Natural killer cell (primary cell): ENCODE measurements at regions of chr13 and their contacts with region 1.

Region 1: DNA sequence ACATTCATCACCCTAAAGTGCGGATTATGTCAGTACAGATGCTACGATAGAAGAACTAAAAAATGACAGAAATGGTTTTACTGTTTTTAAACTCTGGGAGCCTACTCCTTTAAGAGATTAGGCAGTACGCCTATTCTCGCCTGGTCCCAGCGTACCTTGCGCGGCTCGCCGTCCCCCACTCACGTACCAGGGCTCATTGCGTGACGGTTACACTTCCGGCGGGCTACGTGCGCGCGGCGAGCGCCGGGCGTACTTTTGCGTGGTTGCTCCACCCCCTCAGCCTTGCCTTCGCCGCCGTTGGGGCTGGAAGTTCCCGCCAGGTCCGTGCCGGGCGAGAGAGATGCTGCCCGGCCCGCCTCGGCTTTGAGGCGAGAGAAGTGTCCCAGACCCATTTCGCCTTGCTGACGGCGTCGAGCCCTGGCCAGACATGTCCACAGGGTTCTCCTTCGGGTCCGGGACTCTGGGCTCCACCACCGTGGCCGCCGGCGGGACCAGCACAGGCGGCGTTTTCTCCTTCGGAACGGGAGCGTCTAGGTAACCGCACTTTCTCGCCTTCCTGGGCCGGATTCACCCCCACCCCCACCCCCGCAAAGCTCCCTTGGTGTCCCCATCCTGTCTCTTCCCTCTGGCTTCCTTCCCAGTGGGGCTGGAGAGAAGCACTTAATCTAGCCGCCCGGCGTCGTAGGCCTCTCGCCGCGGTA is at the start of gene NUP58:
- DNase-seq: peak; percentile 92 to 98
- ATAC-seq: peak; percentile 97 to 100 (median 98)
- H3K4me3 ChIP-seq: peak within 1 kb of the TSS; percentile 88
- H3K4me3 Mint-ChIP-seq: peak within 1 kb of the TSS; percentile 90
- H3K27ac ChIP-seq: peak within 1 kb of the TSS; percentile 93
- H3K27ac Mint-ChIP-seq: peak within 1 kb of the TSS; percentile 91 to 94
- H3K4me1 ChIP-seq: peaks cover 13% of the 10 kb centered on the region
- H3K4me1 Mint-ChIP-seq: peaks cover 31 to 36% of the 10 kb centered on the region in 2 donors
- H3K27me3 ChIP-seq: peaks cover 7% of the 10 kb centered on the region
- H3K27me3 Mint-ChIP-seq: peaks cover 12 to 20% of the 10 kb centered on the region in 2 donors
- CTCF ChIP-seq: no peak
- total RNA-seq, gene NUP58: 47.4 to 60.0 (median 50.6) TPM

Region 2: GRCh38 chr13:24922745-24923591 is 378.5 kb before region 1 on chr13:
- intact Hi-C with region 1: loop called (anchors 5 kb)
- DNase-seq: peak; percentile 87 to 95
- ATAC-seq: peak; percentile 98 to 100 (median 98)
- H3K4me3 ChIP-seq: peak overlapping the region; percentile 86
- H3K4me3 Mint-ChIP-seq: peak overlapping the region; percentile 96
- H3K27ac ChIP-seq: peak overlapping the region; percentile 97
- H3K27ac Mint-ChIP-seq: peak overlapping the region; percentile 94
- H3K4me1 ChIP-seq: peaks cover 5% of the 10 kb centered on the region
- H3K4me1 Mint-ChIP-seq: peaks cover 17 to 18% of the 10 kb centered on the region in 2 donors
- H3K27me3 ChIP-seq: no peaks in the 10 kb centered on the region
- H3K27me3 Mint-ChIP-seq: peaks cover 0 to 2% of the 10 kb centered on the region in 2 donors
- CTCF ChIP-seq: no peak

Region 3: DNA sequence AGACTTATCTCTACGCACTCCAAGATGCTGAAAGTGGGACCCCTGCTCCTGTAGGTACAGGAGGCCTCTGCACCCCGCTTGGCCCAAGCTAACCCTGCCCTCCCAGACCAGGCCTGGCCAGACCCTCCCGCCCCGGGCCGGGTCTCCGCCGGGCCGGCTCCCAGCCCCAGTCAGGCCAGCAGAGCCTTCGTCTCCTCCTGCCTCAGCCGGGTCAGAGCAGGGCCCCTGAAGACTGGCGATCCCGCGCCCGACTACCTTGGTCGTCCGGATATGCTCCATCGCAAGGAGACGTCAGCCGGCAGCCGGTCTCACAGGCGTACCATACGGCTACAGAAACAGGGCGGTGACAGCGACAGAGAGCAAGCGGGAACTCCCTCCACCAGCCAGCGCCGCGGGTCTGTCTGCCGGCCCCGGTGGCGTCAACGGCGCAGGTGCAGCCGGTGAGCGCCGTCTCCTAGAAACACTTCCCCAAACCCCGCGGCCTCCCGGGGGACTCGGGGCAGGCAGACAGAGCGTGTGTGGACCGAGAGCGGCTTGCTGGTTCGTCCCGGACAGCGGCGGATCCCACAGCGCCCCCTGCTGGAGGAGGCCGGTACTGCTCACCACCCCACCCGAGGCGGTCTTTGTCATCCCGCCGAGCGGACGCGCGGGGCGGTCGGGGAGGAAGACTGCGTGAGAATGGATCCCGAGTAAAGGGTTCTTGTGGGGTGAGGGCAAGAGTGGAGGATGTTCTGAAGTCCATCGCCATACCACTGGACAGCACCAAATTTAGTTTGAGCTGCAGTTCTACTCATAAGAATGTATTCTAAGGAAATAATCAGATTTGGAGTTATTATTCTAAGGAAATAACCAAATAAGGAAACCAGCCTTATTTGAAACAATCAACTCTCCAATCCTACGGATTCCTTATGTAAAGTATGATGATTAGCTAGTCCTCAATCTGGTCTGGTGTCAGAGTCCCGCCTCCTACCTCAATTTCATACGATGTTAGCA is 14.2 kb before region 1 on chr13 and contains the start of gene MTMR6:
- intact Hi-C with region 1: loop called (anchors 1 kb)
- DNase-seq: peak; percentile 94
- ATAC-seq: peak; percentile 88 to 98 (median 91)
- H3K4me3 ChIP-seq: peak within 1 kb of the TSS; percentile 84
- H3K4me3 Mint-ChIP-seq: peak within 1 kb of the TSS; percentile 99
- H3K27ac ChIP-seq: peak within 1 kb of the TSS; percentile 97
- H3K27ac Mint-ChIP-seq: peak within 1 kb of the TSS; percentile 94 to 95
- H3K4me1 ChIP-seq: peaks cover 14% of the 10 kb centered on the region
- H3K4me1 Mint-ChIP-seq: peaks cover 38 to 50% of the 10 kb centered on the region in 2 donors
- H3K27me3 ChIP-seq: peaks cover 6% of the 10 kb centered on the region
- H3K27me3 Mint-ChIP-seq: peaks cover 20 to 30% of the 10 kb centered on the region in 2 donors
- CTCF ChIP-seq: peak; percentile 99
- total RNA-seq, gene MTMR6: 16.4 to 18.1 (median 17.3) TPM

Region 4: DNA sequence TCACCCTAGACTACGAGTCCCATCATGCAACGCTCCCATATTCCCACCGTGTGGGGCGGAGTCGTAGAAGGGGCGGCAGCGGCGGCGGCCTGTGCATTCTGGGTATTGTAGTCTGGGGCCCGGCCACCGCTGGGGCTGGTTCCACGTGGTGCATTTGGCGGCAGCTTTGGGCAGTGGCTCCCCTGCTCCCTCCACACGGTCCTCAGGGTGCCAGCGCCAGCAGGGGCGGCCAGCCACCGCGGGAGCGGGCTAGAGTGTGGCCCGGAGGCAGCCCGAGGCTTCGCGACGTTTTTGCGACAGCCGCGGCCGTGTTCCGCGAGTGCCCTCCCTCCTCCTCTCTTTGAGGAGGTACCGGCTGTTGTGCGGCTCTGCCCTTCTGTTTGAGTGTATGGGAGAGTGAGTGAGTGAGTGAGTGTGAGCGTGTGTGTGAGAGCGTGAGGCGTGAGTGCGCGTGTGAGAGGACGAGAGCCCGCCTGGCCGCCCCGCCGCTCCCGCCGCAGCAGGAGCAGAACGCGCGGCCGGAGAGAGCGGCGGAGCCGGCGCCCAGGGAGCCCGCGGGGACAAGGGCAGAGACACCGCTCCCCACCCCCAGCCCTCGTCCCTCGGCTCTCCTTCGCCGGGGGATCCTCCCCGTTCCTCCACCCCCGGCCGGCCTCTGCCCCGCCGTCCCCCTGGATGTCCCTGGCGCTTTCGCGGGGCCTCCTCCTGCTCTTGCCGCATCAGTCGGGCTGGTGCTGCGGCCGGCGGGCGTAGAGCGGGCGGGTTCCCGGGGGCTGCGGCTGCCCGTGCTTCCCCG is 952.5 kb after region 1 on chr13 and contains the start of gene CDK8:
- intact Hi-C with region 1: loop called (anchors 5 kb)
- DNase-seq: peak; percentile 88 to 94
- ATAC-seq: peak; percentile 86 to 94 (median 87)
- H3K4me3 ChIP-seq: peak within 1 kb of the TSS; percentile 59
- H3K4me3 Mint-ChIP-seq: peak within 1 kb of the TSS; percentile 87
- H3K27ac ChIP-seq: peak within 1 kb of the TSS; percentile 66
- H3K27ac Mint-ChIP-seq: peak within 1 kb of the TSS; percentile 84 to 94
- H3K4me1 ChIP-seq: peaks cover 10% of the 10 kb centered on the region
- H3K4me1 Mint-ChIP-seq: peaks cover 28 to 29% of the 10 kb centered on the region in 2 donors
- H3K27me3 ChIP-seq: peaks cover 2% of the 10 kb centered on the region
- H3K27me3 Mint-ChIP-seq: no peaks in the 10 kb centered on the region
- CTCF ChIP-seq: no peak
- total RNA-seq, gene CDK8: 10.0 to 13.1 (median 10.9) TPM